Dorsolateral prefrontal cortex (tissue), 120 donors: ENCODE measurements at regions of chr10 and their contacts with region 1.

Region 1: DNA sequence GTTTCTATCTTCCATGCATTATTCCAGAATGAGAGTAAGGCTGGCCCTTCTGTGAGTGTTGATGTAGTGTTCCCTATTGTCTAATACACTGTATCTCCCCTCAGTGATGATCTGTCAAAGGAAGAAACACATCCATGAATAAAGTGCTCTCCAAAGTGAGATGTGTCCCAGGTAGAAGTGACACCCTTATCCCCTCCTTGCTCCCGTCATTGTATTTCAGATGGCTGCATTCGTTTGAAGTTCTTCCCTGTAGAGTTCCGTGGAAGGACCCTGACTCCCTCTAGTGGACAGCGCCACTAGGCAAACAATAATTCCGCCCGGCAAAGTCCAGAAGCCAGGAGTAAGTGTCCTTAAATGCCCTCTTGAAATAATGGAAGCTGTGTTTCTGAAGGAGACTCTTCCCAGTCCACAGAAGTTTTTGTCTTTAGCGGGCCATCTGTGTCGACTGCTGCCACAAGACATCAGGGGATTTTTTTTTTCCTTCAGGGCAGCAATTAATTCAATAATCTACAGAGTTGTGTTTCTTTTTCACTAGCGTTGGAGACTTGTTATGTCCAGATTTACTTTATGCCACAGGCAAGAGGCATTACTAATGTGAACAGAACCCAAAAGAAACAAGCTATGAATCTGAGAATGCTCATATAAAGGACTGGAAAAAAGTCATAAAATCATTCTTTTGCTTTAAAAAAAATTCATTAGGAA is 64.6 kb downstream of the THNSL1 start:
- DNase-seq: peak; percentile 63 to 90 (median 84)
- H3K4me3 ChIP-seq: peak overlapping the region in 10 of 59 donors; percentile 2 to 30 (median 18)
- H3K27ac ChIP-seq: peak overlapping the region in 28 of 59 donors; percentile 1 to 81 (median 42)
- H3K27me3 ChIP-seq: no peaks in the 10 kb centered on the region
- CTCF ChIP-seq: peak; percentile 81 to 99 (median 90)

Region 2: DNA sequence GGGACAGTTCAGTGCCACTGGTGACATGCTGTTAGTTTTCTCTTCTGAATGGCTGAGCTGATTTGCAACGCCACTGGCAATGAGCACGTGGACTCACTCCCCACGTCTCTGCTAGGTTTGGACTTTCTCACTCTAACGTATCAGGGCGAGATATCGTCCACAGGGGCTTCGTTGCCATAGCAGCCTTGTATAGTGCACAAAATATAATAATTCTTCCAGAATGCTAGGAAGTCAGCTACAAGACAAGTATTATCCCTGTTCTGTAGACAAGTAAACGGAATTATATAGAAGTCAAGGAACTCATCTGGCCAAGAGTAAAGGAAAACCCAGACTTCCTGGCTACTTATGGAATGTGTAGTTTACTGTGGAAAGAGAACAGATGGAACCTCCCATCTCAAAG is 584.1 kb before region 1 on chr10:
- intact Hi-C with region 1: no loop called
- DNase-seq: no peak
- H3K4me3 ChIP-seq: no peak overlapping the region
- H3K27ac ChIP-seq: no peak overlapping the region
- H3K27me3 ChIP-seq: no peaks in the 10 kb centered on the region
- CTCF ChIP-seq: no peak

Region 3: DNA sequence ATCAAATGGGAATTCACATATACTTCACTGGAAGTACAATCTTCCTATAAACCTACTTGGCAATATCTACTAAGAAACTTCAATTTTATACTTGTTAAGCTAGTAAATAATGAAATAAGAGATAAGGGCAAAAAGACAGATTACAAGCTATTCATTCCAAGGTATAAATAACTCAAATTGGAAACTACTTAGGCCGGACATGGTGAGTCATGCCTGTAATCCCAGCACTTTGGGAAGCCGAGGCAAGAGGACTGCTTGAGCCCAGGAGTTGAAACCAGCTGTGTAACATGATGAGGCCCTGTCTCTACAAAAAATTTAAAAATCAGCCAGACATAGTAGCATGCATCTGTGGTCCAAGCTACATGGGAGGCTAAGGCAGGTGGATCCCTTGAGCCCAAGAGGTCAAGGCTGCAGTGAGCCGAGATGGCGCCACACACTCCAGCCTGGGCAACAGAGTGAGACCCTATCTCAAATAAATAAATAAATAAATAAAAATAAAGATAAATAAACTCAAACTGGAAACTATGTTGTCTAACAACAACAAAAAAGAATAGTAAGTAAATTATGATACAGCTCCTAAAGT is 395.0 kb before region 1 on chr10:
- intact Hi-C with region 1: no loop called
- DNase-seq: no peak
- H3K4me3 ChIP-seq: no peak overlapping the region
- H3K27ac ChIP-seq: peak overlapping the region in 1 of 59 donors; percentile 14
- H3K27me3 ChIP-seq: no peaks in the 10 kb centered on the region
- CTCF ChIP-seq: no peak

Region 4: GRCh38 chr10:25026463-25026862 is 54.6 kb before region 1 on chr10:
- intact Hi-C with region 1: loop called (anchors 2 to 5 kb)
- DNase-seq: no peak
- H3K4me3 ChIP-seq: peak overlapping the region in 4 of 59 donors; percentile 1 to 27 (median 16)
- H3K27ac ChIP-seq: peak overlapping the region in 11 of 59 donors; percentile 0 to 46 (median 18)
- H3K27me3 ChIP-seq: no peaks in the 10 kb centered on the region
- CTCF ChIP-seq: peak in 55 of 56 donors; percentile 51 to 82 (median 66)